ENCODE measurements at regions of chr21 and their contacts with region 1.

Region 1: GRCh38 chr21:15483138-15483780 is 246.5 kb upstream of the USP25 start:
- DNase-seq: peak; percentile 30 to 87
- H3K4me3 ChIP-seq: no peak overlapping the region
- H3K27ac ChIP-seq: no peak overlapping the region
- H3K4me1 ChIP-seq: no peaks in the 10 kb centered on the region
- H3K27me3 ChIP-seq: no peaks in the 10 kb centered on the region
- CTCF ChIP-seq: peak; percentile 61 to 87 (median 81)

Region 2: GRCh38 chr21:14259747-14260146 is 1223.5 kb before region 1 on chr21:
- intact Hi-C with region 1: loop called (anchors 2 kb)
- DNase-seq: no peak
- H3K4me3 ChIP-seq: no peak overlapping the region
- H3K27ac ChIP-seq: no peak overlapping the region
- H3K4me1 ChIP-seq: no peaks in the 10 kb centered on the region
- H3K27me3 ChIP-seq: no peaks in the 10 kb centered on the region
- CTCF ChIP-seq: peak; percentile 32 to 57 (median 46)

Region 3: DNA sequence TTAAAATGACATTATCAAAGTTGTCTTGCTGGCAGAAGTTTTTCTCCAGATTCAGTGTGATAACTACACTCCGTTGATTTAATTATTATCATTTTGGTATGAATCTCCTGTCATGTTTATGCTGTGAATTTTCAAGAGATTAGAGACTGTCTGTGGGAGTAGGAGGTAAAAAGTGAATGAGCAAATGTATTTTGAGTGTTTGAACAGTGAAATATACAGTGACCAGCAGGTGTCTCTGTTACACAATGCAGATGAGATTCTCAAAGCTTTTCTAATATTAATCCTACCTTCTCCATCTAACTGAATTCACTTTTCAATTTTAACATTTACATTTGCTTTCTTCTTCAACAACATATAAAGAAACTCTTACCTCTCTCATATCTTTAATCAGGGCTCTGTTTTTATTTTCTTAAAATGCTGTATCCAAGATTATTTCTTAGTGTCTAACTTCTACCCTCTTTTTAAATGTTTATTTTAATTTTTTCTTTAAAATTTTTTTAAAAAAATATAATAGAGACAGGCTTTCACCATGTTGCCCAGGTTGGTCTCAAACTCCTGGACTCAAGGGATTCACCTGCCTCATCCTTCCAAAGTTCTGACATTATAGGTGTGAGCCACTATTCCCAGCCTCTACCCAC is 1079.5 kb before region 1 on chr21:
- intact Hi-C with region 1: loop called (anchors 1 kb)
- DNase-seq: no peak
- H3K4me3 ChIP-seq: no peak overlapping the region
- H3K27ac ChIP-seq: no peak overlapping the region
- H3K4me1 ChIP-seq: no peaks in the 10 kb centered on the region
- H3K27me3 ChIP-seq: no peaks in the 10 kb centered on the region
- CTCF ChIP-seq: peak; percentile 23 to 37 (median 33)

Region 4: GRCh38 chr21:14864211-14865021 is 618.8 kb before region 1 on chr21:
- intact Hi-C with region 1: loop called (anchors 1 kb)
- DNase-seq: peak in 1 of 2 donors; percentile 12
- H3K4me3 ChIP-seq: no peak overlapping the region
- H3K27ac ChIP-seq: no peak overlapping the region
- H3K4me1 ChIP-seq: no peaks in the 10 kb centered on the region
- H3K27me3 ChIP-seq: no peaks in the 10 kb centered on the region
- CTCF ChIP-seq: peak in 1 of 3 experiments; percentile 21

Region 5: GRCh38 chr21:15001857-15002606 is 481.2 kb before region 1 on chr21:
- intact Hi-C with region 1: no loop called
- DNase-seq: no peak
- H3K4me3 ChIP-seq: no peak overlapping the region
- H3K27ac ChIP-seq: no peak overlapping the region
- H3K4me1 ChIP-seq: peaks cover 0 to 3% of the 10 kb centered on the region in 2 donors
- H3K27me3 ChIP-seq: no peaks in the 10 kb centered on the region
- CTCF ChIP-seq: no peak

Measured in ascending aorta (tissue), 2 donors.